ENCODE measurements at regions of chr5 and their contacts with region 1.

Region 1: DNA sequence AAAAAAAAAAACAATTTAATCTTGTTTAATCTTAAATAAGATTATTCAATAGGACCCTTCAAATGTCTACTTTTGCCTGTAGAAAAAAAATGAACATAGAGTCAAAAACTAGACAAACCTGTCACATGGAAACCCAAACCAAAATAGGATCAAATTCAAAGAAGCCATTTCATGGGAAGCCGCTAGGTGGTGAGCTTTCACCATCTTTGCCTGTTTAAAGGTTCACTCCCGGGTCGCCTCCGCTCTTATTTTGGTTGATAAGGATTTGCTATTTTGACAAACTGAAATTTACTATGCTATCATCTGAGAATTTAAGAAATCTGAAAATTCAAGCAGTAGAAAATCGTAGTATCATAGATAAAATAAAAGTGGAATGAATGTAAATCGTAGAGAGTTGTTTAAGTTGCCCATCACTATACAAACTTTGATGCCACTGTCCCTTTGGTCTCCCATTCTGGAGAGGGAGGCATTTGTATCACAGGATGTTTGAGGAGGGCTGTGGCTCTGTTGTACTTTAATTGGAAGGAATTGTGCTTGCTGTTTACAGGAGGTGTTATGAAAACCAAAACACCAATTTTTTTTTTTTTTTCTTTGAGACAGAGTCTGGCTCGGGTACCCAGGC is 43.5 kb upstream of the DNAH5 start:
- DNase-seq: no peak

Region 2: DNA sequence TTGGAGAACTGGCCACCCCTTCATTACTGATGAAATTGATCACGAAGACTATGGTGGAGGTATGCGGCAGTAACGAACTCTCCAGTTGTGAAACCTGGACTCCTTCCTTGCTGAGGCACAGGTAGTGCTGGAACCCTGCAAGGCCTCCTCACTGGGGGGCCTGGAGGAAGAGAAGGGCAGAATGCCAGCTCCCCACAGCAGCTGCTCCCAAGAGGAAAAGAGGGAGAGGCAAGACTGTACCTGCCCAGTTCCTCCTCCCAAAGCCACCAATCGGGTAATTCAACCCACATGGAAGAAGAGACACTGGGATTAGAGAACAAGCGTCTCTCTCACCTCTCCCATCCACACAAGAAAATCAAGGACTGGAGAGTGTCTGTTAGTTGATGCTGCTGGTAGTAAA is 136.1 kb after region 1 on chr5:
- intact Hi-C with region 1: loop called in 1 of 2 experiments (anchors 10 kb)
- DNase-seq: no peak

Region 3: DNA sequence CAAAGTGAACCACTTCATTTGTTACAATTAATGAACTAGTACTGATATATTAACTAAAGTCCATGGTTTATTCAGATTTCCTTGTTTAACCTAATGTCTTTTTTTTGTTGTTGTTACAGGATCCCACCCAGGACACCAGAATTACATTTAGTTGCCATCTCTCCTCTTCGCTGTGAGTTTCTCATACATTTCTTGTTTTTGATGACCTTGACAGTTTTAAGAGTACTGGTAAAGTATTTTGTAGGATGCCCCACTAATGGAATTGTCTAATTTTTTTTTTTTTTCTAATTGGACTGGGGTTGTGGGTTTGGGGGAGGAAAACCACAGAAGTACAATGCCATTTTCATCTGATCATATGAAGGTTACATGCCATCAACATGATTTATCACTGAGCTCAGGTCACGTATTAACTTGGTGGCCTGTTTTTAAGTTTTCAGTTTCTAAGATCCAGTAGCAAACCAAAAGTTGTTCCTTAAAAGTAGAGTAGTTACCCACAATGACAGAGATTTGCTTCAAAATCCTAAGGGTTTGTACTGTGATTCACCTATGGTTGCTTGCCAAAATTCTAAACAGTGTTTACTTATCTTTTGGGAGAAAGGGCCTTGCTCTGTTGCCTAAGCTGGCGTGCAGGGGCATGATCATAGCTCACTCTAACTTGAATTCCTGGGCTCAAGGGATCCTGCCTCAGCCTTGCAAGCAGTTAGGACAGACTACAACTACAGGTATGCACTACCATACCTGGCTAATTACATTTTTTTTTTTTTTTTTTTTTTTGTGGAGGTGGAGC is 672.1 kb after region 1 on chr5:
- intact Hi-C with region 1: loop called in 1 of 2 experiments (anchors 10 kb)
- DNase-seq: no peak

Measured in posterior vena cava (tissue), 2 donors.